SK-N-SH (cell line): ENCODE measurements at regions of chr21 and their contacts with region 1.

Region 1: DNA sequence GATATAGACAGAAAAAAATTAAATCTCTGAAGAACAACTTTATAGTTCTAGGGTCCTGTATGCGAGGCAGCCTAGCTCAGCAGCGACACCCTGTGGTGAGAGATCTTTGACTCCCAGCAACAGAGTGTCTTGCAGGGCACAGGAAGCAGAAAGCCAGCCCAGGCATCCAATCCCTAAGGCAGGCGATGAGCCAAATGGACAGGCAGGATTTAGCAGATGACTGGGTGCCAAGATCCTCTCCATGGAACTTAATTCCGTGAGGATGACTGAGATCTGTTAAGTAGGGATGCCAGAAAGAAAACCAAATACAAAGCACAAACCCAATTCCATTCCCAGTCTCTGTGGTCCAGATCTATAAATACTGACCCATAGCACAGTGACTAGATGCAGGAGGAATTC is 38.8 kb downstream of the HLCS start:
- DNase-seq: peak; percentile 81
- H3K4me3 ChIP-seq: no peak overlapping the region
- H3K27ac ChIP-seq: peak overlapping the region in 1 of 2 experiments; percentile 29; a peak in 1 of 4 replicates
- H3K4me1 ChIP-seq: peaks cover 4 to 12% of the 10 kb centered on the region in 2 experiments; a peak in 2 of 4 replicates
- H3K27me3 ChIP-seq: no peaks in the 10 kb centered on the region
- CTCF ChIP-seq: peak; percentile 99
- EP300 ChIP-seq: no peak
- RAD21 ChIP-seq: peak; percentile 93

Region 2: DNA sequence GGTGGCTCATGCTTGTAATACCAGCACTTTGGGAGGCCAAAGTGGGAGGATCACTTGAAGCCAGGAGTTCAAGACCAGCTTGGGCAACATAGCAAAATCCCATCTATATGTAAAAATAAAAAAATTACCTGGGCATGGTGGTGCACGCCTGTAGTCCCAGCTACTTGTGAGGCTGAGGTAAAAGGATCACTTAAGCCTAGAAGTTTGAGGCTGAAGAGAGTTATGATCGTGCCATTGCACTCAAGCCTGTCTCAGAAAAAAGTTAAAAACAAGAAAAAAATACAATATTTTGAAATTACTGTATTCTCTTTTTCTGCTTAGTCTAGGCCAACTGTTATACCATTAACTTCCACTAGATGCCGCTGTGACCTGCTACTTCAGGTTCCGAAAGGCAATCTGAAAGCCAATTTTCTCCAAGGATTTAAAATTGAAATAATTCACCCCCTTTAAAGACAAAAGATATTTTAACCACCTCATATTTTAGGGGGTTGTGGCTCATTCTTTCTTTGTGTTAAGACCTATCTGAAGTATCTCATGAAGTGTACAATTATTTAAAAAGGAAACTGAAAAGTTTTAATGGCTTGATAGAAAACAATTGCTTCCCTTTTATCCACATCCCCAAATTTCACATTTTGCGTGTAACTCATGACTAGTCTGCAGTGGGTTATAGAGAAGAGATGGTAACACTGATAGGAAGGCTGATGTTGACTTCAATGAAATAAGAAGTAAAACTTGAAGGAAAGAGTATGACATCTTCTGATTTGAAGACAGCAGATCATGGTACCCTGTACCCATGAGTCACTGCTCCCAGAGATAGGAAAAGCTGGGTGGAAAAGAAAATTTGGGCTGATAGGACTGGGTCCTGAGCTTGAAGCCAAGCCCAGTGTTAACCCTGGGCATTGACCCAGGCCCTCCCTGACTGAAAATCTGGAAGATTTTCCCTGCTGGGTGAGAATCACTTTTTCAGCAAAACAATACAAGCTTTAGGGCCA is 423.4 kb before region 1 on chr21:
- CTCF ChIA-PET with region 1: interaction called, 10 read pairs
- POLR2A ChIA-PET with region 1: no interaction called
- DNase-seq: peak; percentile 35
- H3K4me3 ChIP-seq: peak overlapping the region in 1 of 2 experiments; percentile 20; a peak in 1 of 4 replicates
- H3K27ac ChIP-seq: no peak overlapping the region
- H3K4me1 ChIP-seq: no peaks in the 10 kb centered on the region
- H3K27me3 ChIP-seq: no peaks in the 10 kb centered on the region
- CTCF ChIP-seq: peak; percentile 93
- EP300 ChIP-seq: no peak
- RAD21 ChIP-seq: peak; percentile 87

Region 3: GRCh38 chr21:36630485-36631206 is 297.1 kb before region 1 on chr21:
- CTCF ChIA-PET with region 1: interaction called, 20 read pairs
- POLR2A ChIA-PET with region 1: no interaction called
- DNase-seq: peak; percentile 67
- H3K4me3 ChIP-seq: no peak overlapping the region; a peak in 1 of 4 replicates
- H3K27ac ChIP-seq: no peak overlapping the region
- H3K4me1 ChIP-seq: peaks cover 0 to 12% of the 10 kb centered on the region in 2 experiments; a peak in 1 of 4 replicates
- H3K27me3 ChIP-seq: peaks cover 36% of the 10 kb centered on the region
- CTCF ChIP-seq: peak; percentile 75
- EP300 ChIP-seq: no peak
- RAD21 ChIP-seq: peak; percentile 53

Region 4: DNA sequence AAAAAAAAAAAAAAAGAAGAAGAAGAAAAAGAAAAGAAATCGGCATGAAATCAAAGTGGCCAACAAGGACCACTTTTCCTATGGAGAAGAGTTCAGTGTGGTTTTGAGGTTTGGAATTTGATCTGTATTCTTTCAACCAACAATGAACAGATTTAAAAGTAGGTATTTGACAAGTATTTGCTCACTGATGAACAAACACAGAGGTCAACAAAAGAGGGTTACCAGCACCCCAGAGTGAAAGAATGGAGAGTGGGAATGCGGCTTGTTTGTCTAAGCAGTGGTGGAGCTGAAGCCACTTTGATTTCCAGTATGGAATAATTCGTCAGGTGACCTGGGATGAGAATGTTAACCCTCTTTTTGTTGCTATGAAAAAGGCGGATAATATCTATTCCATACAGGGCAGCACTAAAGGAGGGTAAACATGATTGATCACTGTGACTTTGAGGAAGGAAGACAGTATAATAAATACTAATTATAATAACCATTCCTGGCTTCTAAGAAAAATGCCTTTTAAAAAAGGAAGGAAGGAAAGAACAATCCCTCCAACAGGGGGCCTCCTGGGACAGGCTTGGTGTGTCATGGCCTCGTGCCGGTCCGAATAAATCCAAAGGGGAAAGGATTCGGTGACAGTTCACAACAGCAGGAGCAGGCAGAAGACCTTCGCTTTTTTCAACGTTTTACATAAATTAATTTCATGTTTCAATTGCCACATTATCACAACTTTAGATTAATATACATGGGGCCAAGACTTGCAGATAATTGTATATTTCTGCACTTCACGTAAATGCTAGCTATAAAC is 266.0 kb before region 1 on chr21:
- CTCF ChIA-PET with region 1: interaction called, 11 read pairs
- POLR2A ChIA-PET with region 1: no interaction called
- DNase-seq: peak; percentile 43
- H3K4me3 ChIP-seq: no peak overlapping the region
- H3K27ac ChIP-seq: no peak overlapping the region
- H3K4me1 ChIP-seq: no peaks in the 10 kb centered on the region
- H3K27me3 ChIP-seq: peaks cover 67% of the 10 kb centered on the region
- CTCF ChIP-seq: peak; percentile 49
- EP300 ChIP-seq: no peak
- RAD21 ChIP-seq: peak; percentile 63

Region 5: GRCh38 chr21:36917471-36918158 is 10.1 kb before region 1 on chr21:
- CTCF ChIA-PET with region 1: interaction called, 17 read pairs
- POLR2A ChIA-PET with region 1: no interaction called
- DNase-seq: no peak
- H3K4me3 ChIP-seq: no peak overlapping the region
- H3K27ac ChIP-seq: no peak overlapping the region
- H3K4me1 ChIP-seq: no peaks in the 10 kb centered on the region; a peak in 1 of 4 replicates
- H3K27me3 ChIP-seq: no peaks in the 10 kb centered on the region
- CTCF ChIP-seq: peak; percentile 47
- EP300 ChIP-seq: no peak
- RAD21 ChIP-seq: peak; percentile 48